PC-3 (cell line): ENCODE measurements at regions of chr17 and their contacts with region 1.

Region 1: DNA sequence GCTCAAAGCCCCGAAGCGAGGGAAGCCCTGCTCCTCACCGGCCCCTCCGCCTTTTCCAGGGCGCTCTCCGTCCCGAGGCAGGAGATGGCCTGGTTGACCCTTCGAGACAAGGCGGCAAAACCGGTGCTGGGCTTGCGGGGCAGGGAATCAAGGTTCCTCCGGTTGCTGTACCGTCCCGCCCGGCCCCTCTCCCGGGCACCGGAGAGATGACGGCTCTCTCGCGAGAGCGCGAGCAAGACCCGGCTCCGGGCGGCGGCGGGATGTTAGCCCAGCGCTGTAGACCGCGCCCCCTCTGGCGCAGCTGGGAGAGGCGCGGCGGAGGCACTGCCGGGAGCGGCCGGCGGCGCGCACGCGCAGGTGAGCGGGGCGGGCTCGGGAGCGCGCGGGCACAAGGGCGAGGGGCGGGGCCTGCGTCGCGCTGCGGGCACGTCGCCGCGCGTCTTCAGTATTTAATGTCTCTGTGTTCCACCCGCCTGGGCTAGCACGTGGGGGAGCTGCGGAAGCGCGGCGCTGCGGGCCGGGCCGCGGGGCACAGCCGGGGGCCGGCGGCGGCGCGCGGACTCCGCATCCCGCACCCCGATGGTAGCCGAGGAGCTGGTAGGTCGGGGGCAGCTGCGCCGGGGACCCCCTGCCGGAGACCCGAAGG is at the start of gene AKAP1:
- DNase-seq: peak; percentile 99
- ATAC-seq: peak; percentile 91
- H3K4me3 ChIP-seq: peak within 1 kb of the TSS; percentile 81
- H3K27ac ChIP-seq: peak within 1 kb of the TSS; percentile 72
- H3K4me1 ChIP-seq: peaks cover 22% of the 10 kb centered on the region
- H3K27me3 ChIP-seq: no peaks in the 10 kb centered on the region
- CTCF ChIP-seq: no peak
- total RNA-seq, gene AKAP1: 73.1 and 108 TPM in 2 replicates

Region 2: DNA sequence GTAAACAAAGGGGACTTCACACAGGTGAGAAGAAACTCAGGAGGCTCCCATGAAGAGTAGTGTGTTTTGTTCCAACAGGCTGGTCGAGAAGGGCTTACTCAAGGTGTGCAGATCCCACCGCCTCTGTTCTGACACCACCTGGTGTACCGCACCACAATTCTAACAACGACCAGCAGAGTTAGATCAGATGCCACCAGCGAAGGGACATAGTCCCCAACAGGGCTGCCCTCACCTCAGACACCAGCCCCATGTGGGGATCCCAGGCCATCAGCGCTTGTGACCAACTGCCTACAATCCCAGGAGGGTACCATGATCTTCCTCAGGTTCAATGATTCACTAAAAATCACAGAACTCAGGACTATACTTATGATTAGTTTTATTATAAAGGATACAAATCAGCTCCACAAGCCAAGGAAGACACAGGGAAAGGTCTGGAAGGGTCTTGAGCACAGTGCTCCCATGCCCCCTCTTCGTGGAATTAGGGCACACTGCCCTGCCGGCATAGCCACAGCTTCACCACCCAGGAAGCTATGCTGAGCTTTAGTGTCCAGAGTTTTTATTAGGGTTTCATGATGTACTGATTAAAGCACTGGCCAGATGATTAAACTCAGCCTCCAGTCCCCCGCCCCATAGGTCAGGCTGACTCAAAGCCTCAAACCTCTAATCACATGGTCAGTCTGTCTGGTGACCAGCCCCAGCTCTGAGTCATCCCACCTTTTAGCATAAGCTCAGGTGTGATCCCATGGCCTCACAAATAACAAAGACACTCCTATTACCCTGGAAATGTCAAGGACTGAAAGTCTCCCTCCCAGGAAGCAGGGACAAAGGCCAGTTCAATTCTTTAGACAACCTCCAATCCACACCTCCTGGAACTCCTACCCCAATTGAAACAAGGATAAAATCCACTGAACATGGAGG is 197.1 kb before region 1 on chr17:
- CTCF ChIA-PET with region 1: no interaction called
- POLR2A ChIA-PET with region 1: no interaction called
- intact Hi-C with region 1: no loop called
- DNase-seq: peak; percentile 57
- ATAC-seq: peak; percentile 60
- H3K4me3 ChIP-seq: no peak overlapping the region
- H3K27ac ChIP-seq: no peak overlapping the region
- H3K4me1 ChIP-seq: no peaks in the 10 kb centered on the region
- H3K27me3 ChIP-seq: no peaks in the 10 kb centered on the region
- CTCF ChIP-seq: no peak

Region 3: DNA sequence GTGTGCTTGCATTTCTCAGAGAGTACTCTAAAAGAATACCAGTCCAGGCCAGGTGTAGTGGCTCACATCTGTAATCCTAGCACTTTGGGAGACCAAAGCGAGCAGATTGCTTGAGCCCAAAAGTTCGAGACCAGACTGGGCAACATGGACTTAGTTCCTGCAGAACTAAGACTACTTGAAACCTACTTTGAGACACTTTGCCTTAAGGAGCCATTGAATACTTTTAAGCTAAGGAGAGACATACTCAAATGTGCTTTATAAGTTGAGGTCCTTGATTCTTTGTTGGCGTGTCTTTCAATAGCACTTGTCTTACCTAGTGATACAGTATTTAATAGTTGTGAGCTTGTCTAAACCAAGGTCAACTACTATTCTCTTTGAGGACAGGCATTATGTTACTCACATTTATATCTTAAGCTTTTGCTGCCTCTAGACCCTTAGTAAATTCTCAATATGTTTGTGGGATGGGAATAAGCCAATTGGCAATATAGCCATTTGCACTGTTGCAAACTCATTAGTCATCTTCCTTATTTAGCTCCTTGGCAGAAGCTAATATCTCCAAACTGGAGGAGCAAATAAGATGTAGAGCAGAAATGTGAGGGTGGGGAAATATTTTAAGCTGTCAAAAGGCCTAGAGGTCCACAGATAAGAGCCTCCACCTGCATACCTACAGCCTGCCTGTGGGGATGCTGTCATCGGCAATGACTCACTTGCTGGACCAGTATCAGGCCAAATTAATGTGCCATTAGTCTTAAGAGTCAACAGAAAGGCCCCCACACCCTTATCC is 90.7 kb before region 1 on chr17:
- CTCF ChIA-PET with region 1: no interaction called
- POLR2A ChIA-PET with region 1: interaction called, 3 read pairs
- intact Hi-C with region 1: loop called (anchors 5 kb)
- DNase-seq: peak; percentile 94
- ATAC-seq: peak; percentile 90
- H3K4me3 ChIP-seq: no peak overlapping the region
- H3K27ac ChIP-seq: no peak overlapping the region
- H3K4me1 ChIP-seq: peaks cover 20% of the 10 kb centered on the region
- H3K27me3 ChIP-seq: no peaks in the 10 kb centered on the region
- CTCF ChIP-seq: no peak

Region 4: DNA sequence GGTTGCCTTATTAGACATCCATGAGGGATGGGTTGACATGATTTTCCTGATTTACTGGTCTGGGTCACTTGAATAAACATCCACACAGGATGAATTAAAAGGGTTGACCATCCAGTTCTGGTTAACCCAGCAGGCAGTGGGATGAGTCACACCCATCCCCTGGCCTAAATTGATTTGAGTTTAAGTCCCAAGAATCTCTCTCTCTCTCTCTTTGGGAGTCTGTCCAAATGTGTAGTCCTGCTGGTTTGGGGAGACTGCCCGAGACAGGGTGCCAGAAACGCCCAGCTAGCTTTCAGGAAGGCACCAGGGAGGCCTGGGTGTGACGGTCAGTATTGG is 68.2 kb before region 1 on chr17:
- CTCF ChIA-PET with region 1: no interaction called
- POLR2A ChIA-PET with region 1: no interaction called
- intact Hi-C with region 1: loop called (anchors 2 kb)
- DNase-seq: peak; percentile 99
- ATAC-seq: peak; percentile 90
- H3K4me3 ChIP-seq: no peak overlapping the region
- H3K27ac ChIP-seq: peak overlapping the region; percentile 65
- H3K4me1 ChIP-seq: peaks cover 27% of the 10 kb centered on the region
- H3K27me3 ChIP-seq: no peaks in the 10 kb centered on the region
- CTCF ChIP-seq: no peak

Region 5: GRCh38 chr17:57051886-57052361 is 33.0 kb before region 1 on chr17:
- CTCF ChIA-PET with region 1: interaction called, 3 read pairs
- POLR2A ChIA-PET with region 1: no interaction called
- intact Hi-C with region 1: loop called (anchors 2 kb)
- DNase-seq: no peak
- ATAC-seq: no peak
- H3K4me3 ChIP-seq: no peak overlapping the region
- H3K27ac ChIP-seq: no peak overlapping the region
- H3K4me1 ChIP-seq: peaks cover 7% of the 10 kb centered on the region
- H3K27me3 ChIP-seq: no peaks in the 10 kb centered on the region
- CTCF ChIP-seq: no peak

Region 6: GRCh38 chr17:57106107-57106835 is 21.3 kb after region 1 on chr17:
- CTCF ChIA-PET with region 1: interaction called, 4 read pairs
- POLR2A ChIA-PET with region 1: interaction called, 3 read pairs
- intact Hi-C with region 1: loop called (anchors 1 kb)
- DNase-seq: peak; percentile 55
- ATAC-seq: peak; percentile 39
- H3K4me3 ChIP-seq: no peak overlapping the region
- H3K27ac ChIP-seq: peak overlapping the region; percentile 97
- H3K4me1 ChIP-seq: peaks cover 39% of the 10 kb centered on the region
- H3K27me3 ChIP-seq: no peaks in the 10 kb centered on the region
- CTCF ChIP-seq: peak; percentile 73

Region 7: GRCh38 chr17:57121338-57122042 is 36.6 kb after region 1 on chr17:
- CTCF ChIA-PET with region 1: no interaction called
- POLR2A ChIA-PET with region 1: interaction called, 4 read pairs
- intact Hi-C with region 1: loop called (anchors 5 kb)
- DNase-seq: peak; percentile 63
- ATAC-seq: peak; percentile 73
- H3K4me3 ChIP-seq: no peak overlapping the region
- H3K27ac ChIP-seq: no peak overlapping the region
- H3K4me1 ChIP-seq: no peaks in the 10 kb centered on the region
- H3K27me3 ChIP-seq: no peaks in the 10 kb centered on the region
- CTCF ChIP-seq: peak; percentile 77

Region 8: DNA sequence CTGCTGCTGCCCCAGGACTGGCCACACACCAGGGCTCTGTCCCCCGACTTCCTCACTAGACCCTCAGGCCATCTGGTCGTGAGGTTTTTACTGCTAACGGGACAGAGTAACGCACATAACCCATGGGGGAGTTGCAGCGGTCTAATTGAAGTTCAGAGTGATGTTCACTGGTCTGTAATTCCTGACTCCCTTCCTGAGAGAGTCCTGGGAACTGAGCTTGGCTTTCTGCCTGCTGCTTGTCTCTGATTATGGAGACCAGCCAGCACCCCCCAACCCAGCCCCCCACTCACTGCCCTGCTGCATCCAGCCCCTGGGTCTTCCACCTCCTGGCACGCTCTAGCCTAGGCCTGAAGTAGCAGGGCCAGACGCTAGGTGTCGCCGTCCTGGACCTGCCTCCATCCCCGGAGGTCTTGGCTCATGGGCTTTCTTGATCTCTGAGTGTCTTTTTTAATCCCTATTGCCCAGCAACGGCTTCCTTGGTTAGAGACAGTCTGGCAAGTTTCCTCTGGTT is 467.2 kb after region 1 on chr17:
- CTCF ChIA-PET with region 1: no interaction called
- POLR2A ChIA-PET with region 1: no interaction called
- intact Hi-C with region 1: no loop called
- DNase-seq: no peak
- ATAC-seq: no peak
- H3K4me3 ChIP-seq: no peak overlapping the region
- H3K27ac ChIP-seq: no peak overlapping the region
- H3K4me1 ChIP-seq: peaks cover 5% of the 10 kb centered on the region
- H3K27me3 ChIP-seq: no peaks in the 10 kb centered on the region
- CTCF ChIP-seq: no peak

Region 9: DNA sequence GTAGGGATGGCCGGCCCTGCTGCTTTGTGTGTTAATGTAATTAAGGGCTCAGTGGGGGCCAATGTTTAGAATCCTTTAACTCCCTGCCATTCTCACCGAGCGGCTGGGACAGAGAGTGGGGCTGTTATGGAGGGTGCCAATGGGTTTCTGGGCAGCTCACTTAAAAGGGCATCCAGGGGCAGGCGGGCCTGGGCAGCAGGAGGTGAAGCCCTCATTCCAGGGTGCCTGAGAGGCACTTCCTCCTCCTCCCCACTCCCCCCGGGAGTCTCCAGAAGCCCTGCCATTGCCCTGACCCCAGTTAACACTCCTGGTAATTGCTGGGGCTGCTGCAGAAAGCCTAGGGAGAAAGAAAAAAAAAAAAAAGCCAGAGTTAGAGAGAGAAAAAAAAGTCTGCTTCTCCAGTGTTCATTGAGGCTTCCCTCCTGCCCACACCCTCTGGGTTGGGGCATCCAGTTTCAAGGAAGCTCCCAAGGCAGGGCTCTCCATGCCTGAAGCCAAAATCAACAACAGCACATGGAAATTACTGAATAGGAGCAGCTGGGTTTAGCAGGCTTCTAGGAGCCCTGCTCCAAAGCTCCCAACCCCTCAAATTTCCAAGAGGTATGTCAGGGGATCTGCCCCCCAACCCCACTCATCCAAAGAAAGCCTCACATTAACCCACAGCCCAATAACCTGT is 842.3 kb after region 1 on chr17:
- CTCF ChIA-PET with region 1: no interaction called
- POLR2A ChIA-PET with region 1: interaction called, 13 read pairs
- intact Hi-C with region 1: no loop called
- DNase-seq: peak; percentile 85
- ATAC-seq: peak; percentile 96
- H3K4me3 ChIP-seq: no peak overlapping the region
- H3K27ac ChIP-seq: peak overlapping the region; percentile 68
- H3K4me1 ChIP-seq: peaks cover 32% of the 10 kb centered on the region
- H3K27me3 ChIP-seq: no peaks in the 10 kb centered on the region
- CTCF ChIP-seq: no peak